HEK293T (cell line): ENCODE measurements at regions of chr14 and their contacts with region 1.

Region 1: DNA sequence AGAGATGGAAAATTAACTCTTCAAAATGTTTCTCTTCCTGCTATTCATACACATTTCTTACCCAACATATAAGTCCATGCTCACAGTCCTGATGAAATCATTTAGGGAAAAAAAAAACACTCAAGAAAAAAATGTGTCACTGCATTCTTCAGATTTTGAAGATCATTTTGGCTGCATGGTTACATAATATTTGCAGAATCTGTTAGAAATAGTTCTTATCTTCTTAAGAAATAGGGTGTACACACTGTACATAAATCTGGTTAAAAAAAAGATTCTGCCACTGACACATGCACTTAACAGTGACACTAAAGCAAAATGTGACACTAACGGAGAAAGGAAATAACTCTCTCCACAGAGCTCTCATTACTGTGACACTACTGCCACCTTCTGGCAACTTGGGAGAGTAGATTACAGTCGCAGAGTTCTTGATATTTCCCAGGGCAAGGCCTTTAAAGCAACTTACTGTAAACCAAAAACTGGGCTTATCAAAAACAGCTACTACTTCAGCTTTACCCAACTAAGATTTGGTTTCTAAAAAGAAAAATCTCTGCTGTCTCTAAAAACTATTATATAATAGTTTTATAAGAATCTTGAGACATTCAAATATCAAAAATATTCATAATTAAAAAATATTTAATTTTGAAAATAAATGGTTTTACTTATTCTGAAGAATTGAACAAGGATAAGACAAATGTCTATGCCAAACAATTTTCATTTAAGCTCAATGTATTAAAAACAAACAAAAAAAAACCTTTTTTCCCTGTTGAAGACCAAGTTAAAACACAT is 65.0 kb downstream of the SETD3 start:
- DNase-seq: peak; percentile 69

Region 2: GRCh38 chr14:99320105-99320572 is 95.5 kb before region 1 on chr14:
- CTCF ChIA-PET with region 1: interaction called, 12 read pairs
- POLR2A ChIA-PET with region 1: interaction called, 3 read pairs
- DNase-seq: peak; percentile 88

Region 3: GRCh38 chr14:99344051-99344758 is 71.5 kb before region 1 on chr14:
- CTCF ChIA-PET with region 1: no interaction called
- POLR2A ChIA-PET with region 1: no interaction called
- DNase-seq: no peak

Region 4: DNA sequence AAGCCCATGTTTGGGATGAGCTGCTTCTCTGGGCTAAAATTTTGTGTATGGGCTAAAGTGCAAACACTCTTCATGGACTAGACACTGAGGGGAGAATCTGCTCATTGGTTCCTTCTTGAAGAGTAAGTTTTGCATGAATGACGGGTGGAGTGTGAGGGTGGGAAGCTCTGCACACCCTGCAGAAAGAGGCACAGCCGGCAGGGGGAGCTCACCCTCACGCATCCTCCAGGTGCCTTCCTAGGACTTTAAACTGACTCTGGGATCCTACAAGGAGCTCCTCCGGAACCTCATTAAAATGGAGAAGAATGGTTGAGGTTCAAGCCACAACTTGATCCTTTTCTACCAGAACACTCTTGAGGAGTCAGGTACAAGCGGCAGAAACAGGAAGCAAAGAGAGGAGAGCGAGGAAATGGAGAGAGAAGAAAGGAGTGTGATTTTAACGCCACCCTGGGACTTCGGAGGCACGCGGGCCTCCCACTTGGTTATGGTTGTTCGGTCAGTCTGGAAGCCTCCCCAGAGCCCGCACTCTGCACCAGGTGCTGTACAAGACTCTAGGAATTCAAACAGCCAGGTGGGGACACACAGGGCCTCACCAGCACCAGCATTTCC is 22.5 kb before region 1 on chr14:
- CTCF ChIA-PET with region 1: interaction called, 35 read pairs
- POLR2A ChIA-PET with region 1: interaction called, 4 read pairs
- DNase-seq: peak; percentile 68

Region 5: DNA sequence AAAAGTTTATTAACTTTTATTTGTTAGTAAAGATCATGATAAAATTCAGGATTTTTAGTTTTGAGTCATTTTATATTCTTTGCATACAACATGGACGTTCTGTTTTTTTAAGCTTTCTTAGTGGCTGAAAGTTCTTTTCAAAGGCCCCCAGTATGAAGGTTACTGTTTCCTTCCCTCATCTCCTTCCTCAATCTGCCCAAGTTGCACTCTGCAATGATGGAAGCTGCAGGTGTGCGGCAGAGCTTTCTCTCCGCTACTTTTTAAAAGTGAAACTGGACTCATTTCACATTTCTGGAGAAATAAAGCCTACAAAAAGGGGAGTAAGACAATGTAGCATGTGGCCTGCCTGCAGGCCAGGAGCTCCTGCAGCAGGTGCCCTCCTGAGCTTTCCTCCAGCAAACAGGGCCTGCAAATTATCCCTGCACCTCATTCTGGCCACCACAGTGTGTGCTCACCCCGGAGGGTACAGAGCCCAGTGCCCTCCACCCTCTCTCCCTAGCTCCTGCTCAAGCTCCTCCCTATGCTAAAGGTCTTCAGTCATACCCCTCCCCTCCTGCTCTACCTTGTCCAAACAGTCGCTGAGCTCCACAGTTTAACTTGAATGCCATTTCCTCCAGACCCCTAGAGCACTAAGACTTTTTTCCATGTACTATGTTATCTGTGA is 13.9 kb before region 1 on chr14:
- CTCF ChIA-PET with region 1: interaction called, 10 read pairs
- POLR2A ChIA-PET with region 1: no interaction called
- DNase-seq: no peak